ENCODE measurements at regions of chr1 and their contacts with region 1.

Region 1: GRCh38 chr1:78839704-78840277 is 166.7 kb downstream of the ADGRL4 start:
- DNase-seq: no peak
- H3K4me3 ChIP-seq: no peak overlapping the region
- H3K27ac ChIP-seq: no peak overlapping the region
- H3K4me1 ChIP-seq: peaks cover 15% of the 10 kb centered on the region
- H3K27me3 ChIP-seq: no peaks in the 10 kb centered on the region
- CTCF ChIP-seq: peak; percentile 79

Region 2: GRCh38 chr1:79197421-79197820 is 357.6 kb after region 1 on chr1:
- intact Hi-C with region 1: loop called (anchors 5 kb)
- DNase-seq: no peak
- H3K4me3 ChIP-seq: no peak overlapping the region
- H3K27ac ChIP-seq: no peak overlapping the region
- H3K4me1 ChIP-seq: no peaks in the 10 kb centered on the region
- H3K27me3 ChIP-seq: no peaks in the 10 kb centered on the region
- CTCF ChIP-seq: peak; percentile 61

Measured in left ventricle myocardium inferior (tissue), 1 donor.